Heart right ventricle (tissue), 16 donors: ENCODE measurements at regions of chr12 and their contacts with region 1.

Region 1: GRCh38 chr12:51047655-51048540 is at the start of gene LETMD1:
- DNase-seq: peak; percentile 86 to 97
- ATAC-seq: peak; percentile 99 to 100 (median 100)
- H3K4me3 ChIP-seq: peak within 1 kb of the TSS; percentile 65 to 90 (median 84)
- H3K27ac ChIP-seq: peak within 1 kb of the TSS; percentile 91 to 98 (median 94)
- H3K4me1 ChIP-seq: peaks cover 0 to 31% (median 21%) of the 10 kb centered on the region in 9 donors
- H3K27me3 ChIP-seq: no peaks in the 10 kb centered on the region
- CTCF ChIP-seq: peak; percentile 73 to 99 (median 90)
- total RNA-seq, gene LETMD1: 17.3 to 27.3 (median 22.3) TPM

Region 2: DNA sequence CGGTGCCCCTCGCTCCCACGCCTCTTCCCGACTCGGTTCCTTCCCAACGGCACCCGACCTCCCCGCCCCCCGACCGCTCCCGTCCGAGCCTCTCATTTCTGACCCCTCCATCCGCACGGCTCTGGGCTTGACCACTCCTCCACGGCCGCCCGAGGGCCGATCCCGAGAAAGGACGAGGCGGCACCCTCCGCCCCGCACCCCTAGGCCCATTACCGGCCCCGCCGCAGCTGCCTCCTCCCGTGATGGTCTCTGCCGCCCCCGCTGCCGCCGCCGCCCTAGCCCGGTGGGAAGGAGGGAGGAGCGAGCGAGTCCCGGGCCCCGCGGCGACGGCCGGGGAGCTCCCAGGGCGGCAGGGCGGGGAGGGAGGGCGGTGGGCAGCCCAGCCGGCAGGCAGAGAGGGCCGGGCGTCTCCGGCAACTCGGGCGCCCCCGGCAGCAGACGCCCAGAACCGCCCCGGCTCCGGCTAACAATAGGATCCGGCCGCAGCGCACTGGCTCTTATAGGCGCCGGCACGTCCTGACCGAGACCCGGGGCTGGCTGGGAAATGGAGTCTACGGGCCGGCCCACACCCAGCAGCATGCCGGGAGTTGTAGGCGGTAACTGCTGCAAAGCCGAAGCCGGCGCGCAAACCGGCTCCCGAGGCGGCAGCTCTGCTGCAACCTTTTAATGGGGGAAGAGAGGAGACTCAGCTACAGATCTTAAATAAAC is 35.4 kb after region 1 on chr12 and contains the start of gene CSRNP2:
- intact Hi-C with region 1: loop called in 3 of 10 experiments (anchors 2 to 5 kb)
- DNase-seq: peak; percentile 96
- ATAC-seq: peak; percentile 99 to 100 (median 100)
- H3K4me3 ChIP-seq: peak within 1 kb of the TSS; percentile 70 to 98 (median 90)
- H3K27ac ChIP-seq: peak within 1 kb of the TSS; percentile 64 to 98 (median 96)
- H3K4me1 ChIP-seq: peaks cover 0 to 33% (median 21%) of the 10 kb centered on the region in 9 donors
- H3K27me3 ChIP-seq: no peaks in the 10 kb centered on the region
- CTCF ChIP-seq: peak in 3 of 9 donors; percentile 5 to 36 (median 18)
- total RNA-seq, gene CSRNP2: 13.7 to 25.3 (median 16.1) TPM

Region 3: DNA sequence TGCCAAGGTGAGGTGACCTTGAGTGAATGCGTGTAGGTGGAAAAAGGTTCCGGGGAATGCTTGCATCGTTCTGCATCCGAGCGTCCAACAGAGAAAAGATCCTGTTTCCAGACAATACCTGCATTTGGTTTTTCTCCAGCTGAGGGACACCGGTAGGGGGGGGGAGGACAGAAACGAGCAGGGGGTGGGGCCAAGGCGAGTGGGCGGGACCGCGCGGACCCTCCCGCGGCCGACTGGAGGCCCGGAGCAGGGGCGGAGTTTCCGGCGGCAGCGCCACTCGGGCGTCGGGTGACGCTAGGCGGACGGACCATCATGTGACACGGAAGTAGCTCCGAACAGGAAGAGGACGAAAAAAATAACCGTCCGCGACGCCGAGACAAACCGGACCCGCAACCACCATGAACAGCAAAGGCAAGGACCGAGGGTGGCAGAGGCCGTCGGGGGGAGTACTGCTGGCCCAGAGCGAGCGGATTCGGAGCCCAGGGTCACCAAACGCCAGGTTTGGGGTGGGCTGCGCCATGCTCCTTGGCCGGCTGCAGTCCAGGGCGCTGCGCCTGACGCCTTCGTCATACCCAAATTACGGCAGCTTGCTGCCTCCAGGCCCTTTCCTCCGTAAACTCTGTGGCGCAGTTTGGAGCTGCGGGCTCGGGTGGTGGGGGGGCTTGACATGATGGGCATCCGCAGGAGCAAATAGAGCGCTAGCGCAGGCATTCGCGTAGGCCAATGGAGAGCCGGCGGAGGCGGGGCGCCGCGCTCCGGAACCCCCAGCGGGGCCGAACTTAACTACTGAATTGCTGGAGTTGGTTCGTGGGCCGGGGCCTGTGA is 190.8 kb after region 1 on chr12 and contains the start of gene DAZAP2:
- intact Hi-C with region 1: loop called in 4 of 10 experiments (anchors 1 to 10 kb)
- DNase-seq: peak; percentile 96 to 97
- ATAC-seq: peak; percentile 98 to 99 (median 99)
- H3K4me3 ChIP-seq: peak within 1 kb of the TSS; percentile 68 to 100 (median 92)
- H3K27ac ChIP-seq: peak within 1 kb of the TSS; percentile 96 to 100 (median 100)
- H3K4me1 ChIP-seq: peaks cover 8 to 47% (median 21%) of the 10 kb centered on the region in 9 donors
- H3K27me3 ChIP-seq: no peaks in the 10 kb centered on the region
- CTCF ChIP-seq: peak in 6 of 9 donors; percentile 6 to 54 (median 37)
- total RNA-seq, gene DAZAP2: 140 to 185 (median 165) TPM

Region 4: DNA sequence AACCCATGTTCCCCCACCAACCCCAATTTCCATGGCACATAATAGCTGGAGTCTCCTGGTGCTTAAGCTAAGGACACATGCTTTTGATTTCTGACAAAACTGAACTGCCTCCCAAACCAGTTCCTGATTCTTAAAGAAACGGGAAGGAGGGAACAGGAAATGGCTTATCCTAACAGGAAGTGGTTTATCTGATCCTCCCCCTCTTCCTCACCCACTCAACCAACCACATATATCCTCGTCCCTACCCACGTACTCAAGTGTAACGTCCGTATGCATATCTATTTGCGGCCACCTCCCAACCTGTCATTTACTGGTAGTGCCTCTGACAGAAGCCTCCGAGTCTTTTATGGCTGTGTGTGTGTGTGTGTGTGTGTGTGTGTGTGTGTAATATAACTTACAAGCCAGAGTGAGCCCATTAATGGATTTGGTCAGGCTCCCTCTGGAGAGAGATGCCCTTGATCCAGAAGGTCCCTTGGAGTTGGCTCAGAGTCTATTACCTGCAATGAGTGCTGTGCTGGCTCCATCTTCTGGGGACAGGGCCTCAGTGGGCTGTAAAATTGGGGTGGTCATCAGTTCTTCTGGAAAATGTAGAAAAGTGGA is 198.5 kb after region 1 on chr12:
- intact Hi-C with region 1: loop called in 3 of 10 experiments (anchors 10 kb)
- DNase-seq: peak in 1 of 2 donors; percentile 29
- ATAC-seq: peak; percentile 54 to 78 (median 65)
- H3K4me3 ChIP-seq: no peak overlapping the region
- H3K27ac ChIP-seq: peak overlapping the region in 4 of 10 donors; percentile 36 to 86 (median 69)
- H3K4me1 ChIP-seq: peaks cover 0 to 65% (median 27%) of the 10 kb centered on the region in 9 donors
- H3K27me3 ChIP-seq: no peaks in the 10 kb centered on the region
- CTCF ChIP-seq: peak in 5 of 9 donors; percentile 8 to 33 (median 28)

Region 5: GRCh38 chr12:51341259-51342007 is 293.5 kb after region 1 on chr12:
- intact Hi-C with region 1: loop called in 8 of 10 experiments (anchors 2 to 10 kb)
- DNase-seq: peak in 1 of 2 donors; percentile 59
- ATAC-seq: peak; percentile 72 to 90 (median 86)
- H3K4me3 ChIP-seq: peak overlapping the region in 5 of 10 donors; percentile 21 to 33 (median 28)
- H3K27ac ChIP-seq: peak overlapping the region in 1 of 10 donors; percentile 56
- H3K4me1 ChIP-seq: peaks cover 0 to 9% (median 4%) of the 10 kb centered on the region in 9 donors
- H3K27me3 ChIP-seq: no peaks in the 10 kb centered on the region
- CTCF ChIP-seq: peak; percentile 84 to 98 (median 97)

Region 6: DNA sequence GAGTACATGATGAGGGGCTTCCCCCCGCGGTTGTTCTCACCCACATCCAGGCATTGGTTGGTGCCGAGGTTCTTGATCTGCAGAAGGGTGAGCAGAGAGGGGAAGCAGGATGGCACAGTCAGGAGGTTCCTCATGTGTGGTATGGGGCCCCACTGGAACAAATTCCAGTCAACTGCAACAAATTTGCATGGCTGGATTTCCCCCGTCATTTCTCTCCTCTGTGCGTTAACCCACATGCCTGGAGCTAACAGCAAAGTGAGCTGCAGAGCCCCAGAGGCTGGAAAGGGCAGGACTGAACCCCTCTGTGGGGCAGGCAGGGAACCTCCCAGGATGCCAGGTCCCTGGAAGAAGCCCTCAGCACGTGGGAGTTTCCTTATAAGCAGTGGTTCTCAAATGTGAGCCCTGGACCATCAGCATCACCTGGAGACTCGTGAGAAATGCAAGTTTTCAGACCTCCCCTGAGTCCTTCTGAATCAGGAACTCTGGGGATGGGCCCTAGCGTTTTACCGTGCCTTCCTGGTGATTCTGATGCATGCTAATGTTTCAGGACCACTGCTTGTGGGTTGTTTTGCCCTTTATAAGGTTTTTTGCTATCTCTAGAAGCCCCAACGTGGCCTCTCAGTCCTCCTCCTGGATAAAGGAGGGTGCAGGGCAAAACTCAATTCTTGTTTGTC is 309.6 kb after region 1 on chr12:
- intact Hi-C with region 1: no loop called
- DNase-seq: no peak
- ATAC-seq: no peak
- H3K4me3 ChIP-seq: no peak overlapping the region
- H3K27ac ChIP-seq: no peak overlapping the region
- H3K4me1 ChIP-seq: peaks cover 0 to 5% (median 0%) of the 10 kb centered on the region in 9 donors
- H3K27me3 ChIP-seq: peaks cover 0 to 4% (median 0%) of the 10 kb centered on the region in 7 donors
- CTCF ChIP-seq: no peak